GM10248 (cell line): ENCODE measurements at regions of chr18 and their contacts with region 1.

Region 1: GRCh38 chr18:74551936-74552555 is 17.7 kb downstream of the CNDP1 start:
- DNase-seq: peak; percentile 82
- CTCF ChIP-seq: peak; percentile 79

Region 2: DNA sequence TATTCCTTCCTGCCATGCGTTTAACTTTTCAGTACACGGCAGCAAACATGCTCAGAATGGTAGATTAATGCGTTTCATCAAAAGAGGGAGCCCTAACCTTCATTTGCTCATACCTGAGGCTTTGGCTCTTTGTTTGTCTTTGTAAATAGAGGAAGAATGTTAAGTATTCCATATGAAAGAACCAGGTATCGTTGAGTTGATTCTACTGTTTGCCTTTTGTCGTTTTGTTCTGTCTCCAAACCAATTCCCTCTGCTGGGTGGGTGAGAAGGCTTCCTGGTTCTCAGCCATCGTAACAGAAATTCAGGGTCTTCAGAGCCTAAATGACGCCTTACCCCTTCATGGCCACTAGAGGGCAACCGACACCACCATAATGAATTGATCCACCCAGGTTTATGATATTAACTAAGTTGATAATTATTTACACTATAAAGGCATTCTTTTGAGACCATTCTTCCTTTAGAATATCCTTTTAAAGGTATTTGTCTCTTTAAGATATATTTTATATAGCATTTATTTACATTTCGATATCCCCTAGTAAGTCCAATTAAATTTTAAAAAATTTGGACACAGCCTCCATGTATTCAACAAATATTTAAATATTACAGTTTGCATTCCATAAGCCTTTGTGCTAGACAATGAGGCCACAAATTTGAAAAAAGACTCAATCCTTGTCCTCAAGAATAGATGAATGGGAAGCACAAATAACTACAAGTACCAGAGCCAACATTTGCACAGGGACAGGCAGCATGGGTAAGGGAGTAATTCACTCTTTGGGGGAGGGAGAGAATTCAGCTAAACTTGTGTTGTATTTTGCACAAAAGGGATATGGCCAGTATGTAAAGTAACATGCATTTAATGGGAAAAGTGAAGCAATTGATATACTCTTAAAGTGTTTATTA is 355.6 kb before region 1 on chr18:
- CTCF ChIA-PET with region 1: interaction called, 17 read pairs
- POLR2A ChIA-PET with region 1: no interaction called
- DNase-seq: peak; percentile 80
- CTCF ChIP-seq: peak; percentile 88

Region 3: DNA sequence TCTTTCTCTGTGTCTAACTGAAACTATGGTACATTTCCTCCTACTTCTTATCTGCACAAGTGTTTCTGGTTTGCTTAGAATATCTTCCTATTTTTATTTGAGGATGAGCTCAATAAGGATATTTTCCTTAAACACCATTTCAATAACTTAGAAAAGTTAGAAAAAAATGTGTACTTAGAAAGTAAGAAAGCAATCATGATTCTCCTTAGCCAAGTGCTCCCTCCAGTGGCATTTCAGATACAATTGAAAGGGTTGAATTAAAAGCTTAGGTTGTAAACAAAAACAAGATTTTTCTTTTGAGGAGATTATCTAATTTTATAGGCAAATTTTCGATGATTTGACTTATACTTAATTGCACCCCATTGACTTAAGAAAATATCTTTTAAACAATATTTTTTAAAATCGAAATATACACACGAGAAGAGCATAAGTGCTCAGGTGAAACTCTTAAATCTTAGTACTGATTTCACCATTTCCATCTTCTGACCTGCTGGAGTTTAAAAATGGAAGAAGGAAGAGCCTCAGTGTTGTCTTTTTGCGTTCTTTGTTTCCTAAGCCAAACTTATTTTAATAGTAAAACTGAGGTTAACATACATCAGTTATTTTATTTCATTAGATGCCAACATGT is 209.5 kb before region 1 on chr18:
- CTCF ChIA-PET with region 1: interaction called, 11 read pairs
- POLR2A ChIA-PET with region 1: no interaction called
- DNase-seq: peak; percentile 26
- CTCF ChIP-seq: peak; percentile 56

Region 4: GRCh38 chr18:74495581-74496507 is 56.2 kb before region 1 on chr18 and contains the start of gene CNDP2:
- CTCF ChIA-PET with region 1: interaction called, 10 read pairs
- POLR2A ChIA-PET with region 1: no interaction called
- DNase-seq: peak; percentile 98
- CTCF ChIP-seq: no peak

Region 5: GRCh38 chr18:74562131-74562730 is 10.2 kb after region 1 on chr18:
- CTCF ChIA-PET with region 1: interaction called, 11 read pairs
- POLR2A ChIA-PET with region 1: no interaction called
- DNase-seq: no peak
- CTCF ChIP-seq: no peak